ENCODE measurements at regions of chr17 and their contacts with region 1.

Region 1: DNA sequence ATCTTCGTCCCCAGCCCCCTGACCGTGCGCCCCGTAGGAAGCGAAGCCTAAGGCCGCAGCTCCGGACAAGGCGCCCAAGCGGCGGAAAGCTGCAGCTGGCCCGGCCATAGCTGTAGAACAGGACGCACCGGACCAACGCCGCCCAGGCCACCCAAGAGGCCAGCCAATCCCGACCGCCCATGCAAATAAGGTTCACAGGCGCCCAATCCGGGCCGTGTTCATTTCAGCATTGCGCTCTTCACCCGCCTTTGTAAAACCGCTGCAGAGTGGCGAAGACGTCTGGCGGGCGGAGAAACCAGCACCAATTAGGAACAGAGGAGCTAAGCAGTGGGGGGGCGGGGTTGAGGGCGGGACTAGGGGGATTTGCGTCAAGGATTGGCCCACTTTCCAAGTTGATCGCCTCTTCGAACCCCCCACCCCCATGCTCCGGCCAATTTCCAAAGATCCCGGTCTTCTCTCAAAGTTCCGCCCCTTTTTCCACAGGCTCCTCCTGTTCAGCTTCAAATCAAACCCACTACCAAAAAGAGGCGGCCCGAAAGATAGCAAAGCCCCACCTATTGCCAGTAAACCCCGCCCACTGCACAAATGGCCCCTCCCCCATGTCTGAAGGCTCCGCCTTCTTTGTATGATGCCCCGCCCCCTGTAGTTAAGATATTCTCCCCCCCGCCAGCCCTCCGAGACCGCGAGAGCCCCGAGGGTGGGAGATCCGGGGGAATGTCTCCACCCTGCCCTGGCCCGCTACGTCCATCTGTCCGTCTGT is at the start of gene TMEM256:
- H3K4me3 ChIP-seq: peak within 1 kb of the TSS; percentile 83
- H3K27ac ChIP-seq: peak within 1 kb of the TSS; percentile 81
- H3K4me1 ChIP-seq: peaks cover 8% of the 10 kb centered on the region
- CTCF ChIP-seq: no peak

Region 2: DNA sequence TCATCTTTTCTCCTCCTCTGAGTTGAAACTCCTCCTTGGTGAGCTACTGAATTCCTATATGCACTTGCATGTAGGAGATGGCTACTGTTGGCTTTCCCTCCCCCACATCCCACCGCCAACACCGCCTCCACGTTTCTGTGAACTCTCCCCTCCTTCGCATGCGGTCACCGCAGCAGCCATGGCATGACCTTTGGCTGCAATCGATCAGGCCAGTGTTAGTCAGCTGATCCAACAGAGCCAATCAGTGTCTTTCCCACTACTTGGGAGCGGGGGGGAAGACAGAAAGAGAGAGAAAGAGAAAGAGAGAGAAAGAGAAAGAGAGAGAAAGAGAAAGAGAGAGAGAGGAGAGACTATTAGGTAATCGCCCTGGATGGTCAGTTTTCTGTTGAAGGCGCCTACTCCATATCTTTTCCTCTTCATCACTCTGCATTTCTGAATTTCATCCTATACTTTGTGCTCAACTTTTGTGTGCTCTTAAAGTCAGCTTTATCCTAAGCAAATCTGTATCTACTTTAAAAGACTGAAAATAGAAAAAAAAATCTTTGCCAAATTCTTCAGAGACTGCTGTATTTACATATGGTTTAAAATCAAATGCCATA is 247.7 kb before region 1 on chr17:
- CTCF ChIA-PET with region 1: no interaction called
- POLR2A ChIA-PET with region 1: no interaction called
- H3K4me3 ChIP-seq: no peak overlapping the region
- H3K27ac ChIP-seq: no peak overlapping the region
- H3K4me1 ChIP-seq: no peaks in the 10 kb centered on the region
- CTCF ChIP-seq: no peak

Region 3: DNA sequence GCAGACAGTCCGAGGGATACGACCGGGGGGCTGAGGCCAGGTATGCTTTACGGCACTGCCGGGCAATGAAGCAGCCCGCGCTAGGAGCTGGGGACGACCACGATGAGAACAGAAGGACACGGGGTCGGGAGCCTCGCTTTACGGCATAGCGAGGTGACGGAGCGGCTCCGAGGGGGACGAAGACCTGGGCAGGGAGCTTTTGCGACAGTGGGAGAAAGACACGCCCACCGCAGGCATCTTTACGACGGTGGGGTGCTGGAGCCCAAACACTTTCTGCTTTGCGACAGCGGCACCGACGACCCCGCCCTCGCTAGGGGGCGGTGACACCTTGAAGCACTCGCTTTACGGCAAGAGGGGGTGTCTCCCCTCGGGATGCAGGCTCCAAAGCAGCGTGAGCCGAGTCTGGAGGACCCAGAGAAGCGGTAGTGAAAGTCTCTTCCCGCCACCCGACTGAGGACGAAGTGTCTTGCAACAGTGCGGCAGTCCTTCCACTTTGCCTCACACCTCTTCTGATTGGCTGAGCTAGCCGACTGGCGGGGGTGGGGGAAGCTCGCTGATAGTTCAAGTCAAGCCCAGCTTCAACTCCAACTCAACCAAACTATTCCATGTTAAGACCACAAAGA is 74.7 kb before region 1 on chr17:
- CTCF ChIA-PET with region 1: interaction called, 3 read pairs
- POLR2A ChIA-PET with region 1: interaction called, 14 read pairs
- H3K4me3 ChIP-seq: peak overlapping the region; percentile 64
- H3K27ac ChIP-seq: peak overlapping the region; percentile 86
- H3K4me1 ChIP-seq: peaks cover 9% of the 10 kb centered on the region
- CTCF ChIP-seq: no peak

Region 4: DNA sequence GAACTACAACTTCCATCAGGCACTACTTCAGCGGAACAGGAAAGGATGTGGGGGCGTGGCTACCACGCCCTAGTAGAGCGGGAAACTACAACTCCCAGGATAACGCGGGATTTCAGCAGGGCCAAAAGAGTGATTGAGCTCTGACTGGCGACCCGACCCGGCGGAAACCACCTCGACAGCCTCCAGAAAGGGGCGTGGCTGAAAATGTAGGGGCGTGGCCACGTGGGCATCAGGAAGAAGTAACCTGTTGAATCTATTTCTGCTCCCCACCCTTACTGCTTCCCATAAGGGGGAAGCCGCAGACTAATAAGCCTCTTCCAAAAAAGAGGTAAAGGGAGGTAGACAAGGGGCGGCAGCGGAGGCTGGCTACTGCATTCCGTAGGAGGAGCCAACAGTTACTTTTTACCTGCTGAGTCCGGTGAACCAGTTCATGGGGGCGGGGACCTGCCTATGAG is 31.1 kb after region 1 on chr17 and contains the start of gene TMEM102:
- CTCF ChIA-PET with region 1: interaction called, 6 read pairs
- POLR2A ChIA-PET with region 1: interaction called, 45 read pairs
- H3K4me3 ChIP-seq: peak within 1 kb of the TSS; percentile 50
- H3K27ac ChIP-seq: peak within 1 kb of the TSS; percentile 19; the same call in 1 of the 2 replicates
- H3K4me1 ChIP-seq: peaks cover 13% of the 10 kb centered on the region
- CTCF ChIP-seq: no peak

Region 5: GRCh38 chr17:7466639-7467341 is 62.6 kb after region 1 on chr17:
- CTCF ChIA-PET with region 1: interaction called, 5 read pairs
- POLR2A ChIA-PET with region 1: interaction called, 10 read pairs
- H3K4me3 ChIP-seq: no peak overlapping the region
- H3K27ac ChIP-seq: 0 out of 2 replicates have a peak overlapping the region, but pooled peaks have one; percentile 19
- H3K4me1 ChIP-seq: peaks cover 5% of the 10 kb centered on the region
- CTCF ChIP-seq: no peak

Region 6: DNA sequence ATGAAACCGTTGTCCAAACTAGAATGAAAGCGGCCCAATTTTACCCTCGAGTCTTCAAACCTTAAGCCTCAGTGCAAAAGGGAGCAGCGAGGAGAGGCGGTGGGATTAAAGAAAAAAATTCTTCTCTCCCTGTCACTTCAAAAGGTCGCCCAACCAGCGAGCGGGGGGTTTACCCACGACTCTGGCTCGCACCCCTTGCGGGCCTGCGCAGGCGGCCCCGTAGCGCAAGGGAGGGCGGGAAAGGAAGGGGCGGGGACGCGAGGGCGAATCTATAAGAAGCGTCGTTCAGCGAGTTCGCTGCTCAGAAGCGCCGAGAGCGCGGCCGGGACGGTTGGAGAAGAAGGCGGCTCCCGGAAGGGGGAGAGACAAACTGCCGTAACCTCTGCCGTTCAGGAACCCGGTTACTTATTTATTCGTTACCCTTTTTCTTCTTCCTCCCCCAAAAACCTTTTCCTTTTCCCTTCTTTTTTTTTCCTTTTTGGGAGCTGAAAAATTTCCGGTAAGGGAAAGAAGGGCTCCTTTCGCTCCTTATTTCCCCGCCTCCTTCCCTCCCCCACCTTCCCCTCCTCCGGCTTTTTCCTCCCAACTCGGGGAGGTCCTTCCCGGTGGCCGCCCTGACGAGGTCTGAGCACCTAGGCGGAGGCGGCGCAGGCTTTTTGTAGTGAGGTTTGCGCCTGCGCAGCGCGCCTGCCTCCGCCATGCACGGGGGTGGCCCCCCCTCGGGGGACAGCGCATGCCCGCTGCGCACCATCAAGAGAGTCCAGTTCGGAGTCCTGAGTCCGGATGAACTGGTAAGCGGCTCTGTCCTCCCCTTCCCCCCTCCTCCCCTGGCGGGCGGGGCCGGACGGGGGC is 80.1 kb after region 1 on chr17 and contains the start of gene POLR2A:
- CTCF ChIA-PET with region 1: interaction called, 3 read pairs
- POLR2A ChIA-PET with region 1: interaction called, 31 read pairs
- H3K4me3 ChIP-seq: peak within 1 kb of the TSS; percentile 87
- H3K27ac ChIP-seq: peak within 1 kb of the TSS; percentile 100
- H3K4me1 ChIP-seq: peaks cover 23% of the 10 kb centered on the region
- CTCF ChIP-seq: no peak